Left cardiac atrium (tissue), 4 donors: ENCODE measurements at regions of chr10 and their contacts with region 1.

Region 1: GRCh38 chr10:51960494-51960895 is 261.1 kb upstream of the CSTF2T start:
- DNase-seq: no peak
- ATAC-seq: peak; percentile 67

Region 2: DNA sequence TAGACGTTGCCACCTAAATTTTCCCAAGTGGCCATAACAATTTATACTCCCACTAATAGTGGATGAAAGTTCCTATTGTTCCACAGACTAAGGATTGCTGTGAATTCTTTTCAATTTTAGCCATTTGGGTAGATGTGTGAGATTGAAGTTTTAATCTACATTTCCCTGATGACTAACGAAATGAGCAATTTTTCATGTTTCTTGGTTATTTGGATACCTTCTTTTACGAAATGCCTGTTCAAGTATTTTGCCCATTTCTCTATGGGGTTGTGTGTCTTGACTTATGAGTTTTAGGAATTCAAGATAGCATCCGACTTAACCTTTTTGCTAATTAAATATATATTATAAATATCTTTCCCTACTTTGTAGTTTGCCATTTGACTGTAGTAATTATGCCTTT is 902.6 kb before region 1 on chr10:
- intact Hi-C with region 1: loop called in 1 of 2 experiments (anchors 5 kb)
- DNase-seq: no peak
- ATAC-seq: no peak

Region 3: GRCh38 chr10:51706225-51706624 is 254.3 kb before region 1 on chr10:
- intact Hi-C with region 1: loop called in 1 of 2 experiments (anchors 5 kb)
- DNase-seq: peak; percentile 82
- ATAC-seq: peak; percentile 91 to 94

Region 4: DNA sequence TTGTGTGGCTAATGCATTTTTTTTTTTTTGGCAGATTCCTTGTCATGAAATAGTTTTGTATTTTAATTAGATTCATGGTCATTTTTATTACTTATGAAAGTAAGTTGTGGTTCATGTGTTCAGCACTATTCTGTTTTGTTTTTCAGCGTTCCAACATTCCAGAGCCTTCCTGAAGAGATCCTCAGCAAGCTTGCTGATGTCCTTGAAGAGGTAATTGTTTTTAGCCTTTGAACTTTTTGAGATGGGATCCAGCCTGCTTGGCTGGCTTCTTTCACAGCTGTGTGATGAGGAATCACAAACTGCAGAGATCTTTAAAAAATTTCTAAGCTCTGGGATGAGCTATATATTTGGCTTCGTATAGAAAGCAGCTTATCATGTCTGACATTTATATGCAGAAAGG is 53.1 kb before region 1 on chr10:
- intact Hi-C with region 1: no loop called
- DNase-seq: no peak
- ATAC-seq: no peak

Region 5: GRCh38 chr10:52376694-52377354 is 416.3 kb after region 1 on chr10:
- intact Hi-C with region 1: no loop called
- DNase-seq: no peak
- ATAC-seq: no peak